WTC11 (cell line): ENCODE measurements at regions of chr14 and their contacts with region 1.

Region 1: GRCh38 chr14:22163051-22163450 is 426.0 kb downstream of the DAD1 start:
- DNase-seq: no peak
- ATAC-seq: peak; percentile 71
- H3K4me3 Mint-ChIP-seq: no peak overlapping the region
- H3K27ac Mint-ChIP-seq: no peak overlapping the region
- H3K4me1 Mint-ChIP-seq: peaks cover 24% of the 10 kb centered on the region
- H3K27me3 Mint-ChIP-seq: no peaks in the 10 kb centered on the region
- CTCF ChIP-seq: no peak

Region 2: DNA sequence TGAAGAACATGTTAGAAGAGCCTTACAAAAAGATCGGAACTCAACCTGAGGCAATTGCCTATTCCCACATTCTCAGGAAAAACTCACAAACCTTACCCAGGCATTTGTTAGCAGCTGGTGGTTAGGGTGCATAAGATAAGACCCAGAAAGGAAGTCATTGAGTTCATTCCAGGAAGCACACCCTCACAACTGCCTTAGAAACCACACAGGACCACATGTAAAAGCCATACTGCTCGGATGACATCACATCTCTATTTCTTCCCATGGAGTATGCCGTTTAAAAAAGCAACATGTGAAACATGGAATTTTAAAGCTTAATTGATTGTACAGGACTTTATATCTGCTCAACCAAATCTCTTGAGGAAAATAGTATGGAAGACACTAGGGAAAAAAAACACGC is 14.8 kb after region 1 on chr14:
- CTCF ChIA-PET with region 1: interaction called, 11 read pairs
- POLR2A ChIA-PET with region 1: no interaction called
- DNase-seq: no peak
- ATAC-seq: no peak
- H3K4me3 Mint-ChIP-seq: no peak overlapping the region
- H3K27ac Mint-ChIP-seq: no peak overlapping the region
- H3K4me1 Mint-ChIP-seq: peaks cover 5% of the 10 kb centered on the region
- H3K27me3 Mint-ChIP-seq: no peaks in the 10 kb centered on the region
- CTCF ChIP-seq: no peak

Region 3: DNA sequence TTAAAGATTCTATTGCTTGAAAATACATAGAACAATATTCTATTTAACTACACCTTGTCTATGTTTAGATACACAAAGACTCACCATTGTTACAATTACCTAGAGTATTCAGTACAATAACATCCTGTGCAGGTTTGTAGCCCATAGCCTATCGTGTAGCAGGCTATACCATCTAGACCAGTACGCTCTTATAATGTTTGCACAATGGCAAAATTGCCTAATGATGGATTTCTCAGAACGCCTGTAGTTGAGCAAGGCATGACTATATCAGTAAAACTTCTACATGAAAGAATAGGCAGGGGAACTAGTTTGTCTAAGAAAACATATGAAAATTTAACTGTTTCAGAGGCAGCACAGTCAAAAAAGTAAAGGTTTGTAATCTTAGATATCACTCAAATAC is 50.1 kb after region 1 on chr14:
- CTCF ChIA-PET with region 1: no interaction called
- POLR2A ChIA-PET with region 1: no interaction called
- DNase-seq: no peak
- ATAC-seq: no peak
- H3K4me3 Mint-ChIP-seq: no peak overlapping the region
- H3K27ac Mint-ChIP-seq: no peak overlapping the region
- H3K4me1 Mint-ChIP-seq: no peaks in the 10 kb centered on the region
- H3K27me3 Mint-ChIP-seq: no peaks in the 10 kb centered on the region
- CTCF ChIP-seq: no peak

Region 4: DNA sequence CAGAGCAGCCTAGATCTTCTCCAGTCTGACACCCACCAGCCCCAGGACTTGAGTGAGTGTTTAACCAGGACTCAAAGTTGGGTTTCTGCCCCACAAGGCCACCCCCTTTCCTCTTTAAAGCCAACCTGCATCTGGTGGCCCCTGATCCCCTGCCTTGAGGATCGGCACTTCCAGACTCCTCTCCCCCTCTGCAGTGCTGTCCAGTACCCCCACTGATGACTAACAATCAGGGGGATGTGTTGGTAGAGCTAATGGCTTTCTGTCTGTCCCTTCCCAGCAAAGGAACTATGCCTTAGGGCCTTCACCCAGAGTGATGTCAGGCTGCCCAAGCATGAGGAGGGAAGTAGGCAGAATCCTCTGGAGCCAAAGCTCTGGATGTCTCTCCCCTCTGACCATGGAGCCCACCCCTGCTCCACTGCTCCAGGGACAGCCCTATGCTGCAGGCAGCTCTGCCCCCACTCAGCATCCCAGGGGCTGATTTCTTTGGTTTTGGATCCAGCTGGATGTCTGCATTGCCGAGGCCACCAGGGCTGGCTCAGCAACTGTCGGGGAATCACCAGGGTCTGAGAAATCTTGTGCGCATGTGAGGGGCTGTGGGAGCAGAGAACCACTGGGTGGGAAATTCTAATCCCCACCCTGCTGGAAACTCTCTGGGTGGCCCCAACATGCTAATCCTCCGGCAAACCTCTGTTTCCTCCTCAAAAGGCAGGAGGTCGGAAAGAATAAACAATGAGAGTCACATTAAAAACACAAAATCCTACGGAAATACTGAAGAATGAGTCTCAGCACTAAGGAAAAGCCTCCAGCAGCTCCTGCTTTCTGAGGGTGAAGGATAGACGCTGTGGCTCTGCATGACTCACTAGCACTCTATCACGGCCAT is 383.0 kb after region 1 on chr14:
- CTCF ChIA-PET with region 1: no interaction called
- POLR2A ChIA-PET with region 1: no interaction called
- DNase-seq: no peak
- ATAC-seq: peak; percentile 72
- H3K4me3 Mint-ChIP-seq: no peak overlapping the region
- H3K27ac Mint-ChIP-seq: 0 out of 2 replicates have a peak overlapping the region, but pooled peaks have one; percentile 54
- H3K4me1 Mint-ChIP-seq: peaks cover 42% of the 10 kb centered on the region
- H3K27me3 Mint-ChIP-seq: no peaks in the 10 kb centered on the region
- CTCF ChIP-seq: no peak